GM12878 (cell line): ENCODE measurements at regions of chr12 and their contacts with region 1.

Region 1: DNA sequence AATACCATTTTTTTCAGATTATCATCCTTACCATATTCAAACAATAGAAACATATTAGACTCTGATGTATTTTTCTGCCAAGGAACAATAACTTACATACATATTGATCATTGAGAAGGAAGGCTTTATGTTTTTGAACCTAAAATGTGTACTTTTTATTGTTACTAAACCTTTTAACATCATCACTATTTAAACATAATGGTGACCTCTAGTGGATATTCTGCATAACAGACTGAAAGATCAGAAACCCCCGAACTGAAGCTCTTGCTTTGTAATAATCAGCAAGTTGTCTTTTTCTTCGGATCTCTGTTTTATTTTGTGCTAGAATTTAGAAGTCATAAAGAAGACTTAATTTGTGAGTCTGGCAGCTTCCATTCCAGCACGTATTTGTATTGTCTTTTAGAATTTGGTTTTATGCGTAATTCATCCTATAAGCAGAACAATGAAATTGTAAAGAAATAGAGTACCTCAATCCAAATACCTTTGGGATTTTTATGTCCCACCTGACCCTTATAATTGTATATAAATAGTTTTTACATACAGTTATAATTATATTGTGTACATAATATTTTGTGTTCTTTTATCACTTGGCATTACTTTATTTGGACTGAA is 125.9 kb upstream of the ATF1 start:
- DNase-seq: no peak
- ATAC-seq: peak; percentile 81
- H3K4me3 ChIP-seq: no peak overlapping the region
- H3K27ac ChIP-seq: no peak overlapping the region
- H3K4me1 ChIP-seq: peaks cover 4% of the 10 kb centered on the region; the same call in 1 of the 2 replicates
- H3K27me3 ChIP-seq: no peaks in the 10 kb centered on the region
- CTCF ChIP-seq: peak; percentile 40 to 64 (median 53); a peak in 5 of 6 replicates
- EP300 ChIP-seq: no peak
- POLR2A ChIP-seq: no peak
- RAD21 ChIP-seq: peak; percentile 73

Region 2: DNA sequence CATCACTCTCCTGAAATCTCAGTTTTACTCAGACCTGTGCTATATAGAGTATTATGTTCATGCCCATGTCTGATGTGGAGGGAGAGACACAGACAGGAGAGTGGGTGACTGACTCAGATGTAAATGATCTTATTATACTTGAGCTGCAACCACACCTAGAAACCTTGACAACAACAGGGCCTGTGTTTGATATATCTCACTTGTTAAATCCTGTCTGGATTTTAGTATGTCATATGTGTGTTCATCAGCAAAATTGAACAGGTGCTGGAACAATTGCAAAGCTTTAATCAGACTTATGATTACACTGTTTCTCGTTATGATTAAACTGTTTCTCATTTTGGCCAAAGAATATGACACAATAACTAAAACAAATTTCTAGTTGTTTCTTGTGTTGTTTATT is 95.5 kb before region 1 on chr12:
- CTCF ChIA-PET with region 1: interaction called, 11 read pairs
- POLR2A ChIA-PET with region 1: no interaction called
- RAD21 ChIA-PET with region 1: interaction called, 5 read pairs
- SMC1A ChIA-PET with region 1: interaction called, 5 read pairs
- in situ Hi-C with region 1: no loop called
- intact Hi-C with region 1: no loop called
- DNase-seq: no peak
- ATAC-seq: peak; percentile 89
- H3K4me3 ChIP-seq: no peak overlapping the region
- H3K27ac ChIP-seq: peak overlapping the region; percentile 39
- H3K4me1 ChIP-seq: peaks cover 19% of the 10 kb centered on the region; the same call in 1 of the 2 replicates
- H3K27me3 ChIP-seq: no peaks in the 10 kb centered on the region
- CTCF ChIP-seq: no peak
- EP300 ChIP-seq: no peak
- POLR2A ChIP-seq: no peak
- RAD21 ChIP-seq: no peak

Region 3: DNA sequence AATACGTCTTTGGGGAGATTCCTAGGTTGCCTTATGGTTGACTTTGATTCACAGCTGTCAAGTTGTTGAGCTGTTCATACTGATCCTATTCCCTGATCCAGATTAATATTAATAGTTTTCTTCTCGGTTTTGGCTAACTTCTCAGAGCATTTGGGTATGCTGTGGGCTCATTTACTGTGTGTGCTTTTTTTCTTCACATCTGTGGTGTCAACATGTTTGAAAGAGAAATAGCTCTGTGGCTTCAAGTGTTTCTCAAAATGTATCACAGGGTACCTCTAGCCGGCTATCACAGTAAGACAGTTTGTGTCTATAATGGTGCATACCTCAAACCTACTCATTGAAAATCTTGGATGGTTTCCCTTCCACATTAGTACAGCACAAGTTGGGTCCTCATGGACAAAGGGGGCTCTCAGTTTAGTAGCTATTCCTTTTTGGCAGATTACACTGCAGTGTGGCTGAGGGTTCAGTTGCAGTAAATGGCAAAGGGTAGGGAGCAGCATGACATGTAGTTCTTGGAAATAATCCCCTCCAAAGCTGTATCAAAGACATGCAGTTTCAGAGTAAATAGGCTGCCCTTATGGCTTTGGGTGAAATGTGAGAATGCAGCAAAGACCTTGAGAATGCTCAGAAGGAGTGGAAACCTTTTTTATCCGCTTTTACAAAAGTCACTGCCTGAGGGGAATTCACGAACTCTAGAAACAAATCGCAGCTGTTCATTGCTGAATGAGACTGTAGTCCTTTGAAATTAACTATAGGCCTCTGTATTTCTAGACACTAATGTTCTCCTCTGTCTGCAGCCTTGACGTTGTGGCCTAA is 23.5 kb after region 1 on chr12:
- CTCF ChIA-PET with region 1: interaction called, 11 read pairs
- POLR2A ChIA-PET with region 1: interaction called, 7 read pairs
- RAD21 ChIA-PET with region 1: interaction called, 30 read pairs
- SMC1A ChIA-PET with region 1: interaction called, 19 read pairs
- in situ Hi-C with region 1: no loop called
- intact Hi-C with region 1: loop called (anchors 2 kb)
- DNase-seq: peak; percentile 72
- ATAC-seq: peak; percentile 76
- H3K4me3 ChIP-seq: no peak overlapping the region
- H3K27ac ChIP-seq: peak overlapping the region; percentile 83
- H3K4me1 ChIP-seq: peaks cover 50% of the 10 kb centered on the region
- H3K27me3 ChIP-seq: no peaks in the 10 kb centered on the region
- CTCF ChIP-seq: no peak
- EP300 ChIP-seq: peak; percentile 40 to 55; a peak in 2 of 4 replicates
- POLR2A ChIP-seq: no peak
- RAD21 ChIP-seq: no peak

Region 4: GRCh38 chr12:50828886-50829285 is 190.9 kb after region 1 on chr12:
- CTCF ChIA-PET with region 1: no interaction called
- POLR2A ChIA-PET with region 1: no interaction called
- RAD21 ChIA-PET with region 1: no interaction called
- SMC1A ChIA-PET with region 1: no interaction called
- in situ Hi-C with region 1: no loop called
- intact Hi-C with region 1: no loop called
- DNase-seq: no peak
- ATAC-seq: no peak
- H3K4me3 ChIP-seq: no peak overlapping the region
- H3K27ac ChIP-seq: no peak overlapping the region
- H3K4me1 ChIP-seq: no peaks in the 10 kb centered on the region
- H3K27me3 ChIP-seq: no peaks in the 10 kb centered on the region
- CTCF ChIP-seq: no peak
- EP300 ChIP-seq: no peak
- POLR2A ChIP-seq: no peak
- RAD21 ChIP-seq: no peak